ENCODE measurements at regions of chr10 and their contacts with region 1.

Region 1: GRCh38 chr10:75021379-75022249 is 89.8 kb upstream of the SAMD8 start:
- DNase-seq: peak; percentile 60 to 64
- H3K4me3 ChIP-seq: peak overlapping the region; percentile 23
- H3K4me3 Mint-ChIP-seq: peak overlapping the region; percentile 76
- H3K27ac Mint-ChIP-seq: peak overlapping the region; percentile 71
- H3K4me1 ChIP-seq: no peaks in the 10 kb centered on the region
- H3K4me1 Mint-ChIP-seq: peaks cover 21% of the 10 kb centered on the region
- H3K27me3 ChIP-seq: no peaks in the 10 kb centered on the region
- H3K27me3 Mint-ChIP-seq: no peaks in the 10 kb centered on the region
- CTCF ChIP-seq: no peak

Region 2: GRCh38 chr10:74262856-74263255 is 758.8 kb before region 1 on chr10:
- CTCF ChIA-PET with region 1: no interaction called
- POLR2A ChIA-PET with region 1: no interaction called
- intact Hi-C with region 1: loop called (anchors 1 kb)
- DNase-seq: no peak
- H3K4me3 ChIP-seq: no peak overlapping the region
- H3K4me3 Mint-ChIP-seq: no peak overlapping the region
- H3K27ac Mint-ChIP-seq: no peak overlapping the region
- H3K4me1 ChIP-seq: no peaks in the 10 kb centered on the region
- H3K4me1 Mint-ChIP-seq: no peaks in the 10 kb centered on the region
- H3K27me3 ChIP-seq: no peaks in the 10 kb centered on the region
- H3K27me3 Mint-ChIP-seq: no peaks in the 10 kb centered on the region
- CTCF ChIP-seq: no peak

Region 3: GRCh38 chr10:74419958-74420375 is 601.6 kb before region 1 on chr10:
- CTCF ChIA-PET with region 1: no interaction called
- POLR2A ChIA-PET with region 1: no interaction called
- intact Hi-C with region 1: loop called (anchors 2 kb)
- DNase-seq: peak in 1 of 2 experiments; percentile 46
- H3K4me3 ChIP-seq: no peak overlapping the region
- H3K4me3 Mint-ChIP-seq: no peak overlapping the region
- H3K27ac Mint-ChIP-seq: no peak overlapping the region
- H3K4me1 ChIP-seq: no peaks in the 10 kb centered on the region
- H3K4me1 Mint-ChIP-seq: no peaks in the 10 kb centered on the region
- H3K27me3 ChIP-seq: no peaks in the 10 kb centered on the region
- H3K27me3 Mint-ChIP-seq: no peaks in the 10 kb centered on the region
- CTCF ChIP-seq: peak; percentile 43 to 47

Region 4: GRCh38 chr10:74651565-74651964 is 370.0 kb before region 1 on chr10:
- CTCF ChIA-PET with region 1: no interaction called
- POLR2A ChIA-PET with region 1: no interaction called
- intact Hi-C with region 1: no loop called
- DNase-seq: no peak
- H3K4me3 ChIP-seq: no peak overlapping the region
- H3K4me3 Mint-ChIP-seq: no peak overlapping the region
- H3K27ac Mint-ChIP-seq: no peak overlapping the region
- H3K4me1 ChIP-seq: no peaks in the 10 kb centered on the region
- H3K4me1 Mint-ChIP-seq: no peaks in the 10 kb centered on the region
- H3K27me3 ChIP-seq: no peaks in the 10 kb centered on the region
- H3K27me3 Mint-ChIP-seq: no peaks in the 10 kb centered on the region
- CTCF ChIP-seq: no peak

Region 5: GRCh38 chr10:74738985-74739567 is 282.5 kb before region 1 on chr10:
- CTCF ChIA-PET with region 1: interaction called, 5 read pairs
- POLR2A ChIA-PET with region 1: no interaction called
- intact Hi-C with region 1: loop called (anchors 5 kb)
- DNase-seq: no peak
- H3K4me3 ChIP-seq: no peak overlapping the region
- H3K4me3 Mint-ChIP-seq: no peak overlapping the region
- H3K27ac Mint-ChIP-seq: no peak overlapping the region
- H3K4me1 ChIP-seq: no peaks in the 10 kb centered on the region
- H3K4me1 Mint-ChIP-seq: peaks cover 6% of the 10 kb centered on the region
- H3K27me3 ChIP-seq: no peaks in the 10 kb centered on the region
- H3K27me3 Mint-ChIP-seq: no peaks in the 10 kb centered on the region
- CTCF ChIP-seq: peak in 1 of 2 experiments; percentile 44

Region 6: DNA sequence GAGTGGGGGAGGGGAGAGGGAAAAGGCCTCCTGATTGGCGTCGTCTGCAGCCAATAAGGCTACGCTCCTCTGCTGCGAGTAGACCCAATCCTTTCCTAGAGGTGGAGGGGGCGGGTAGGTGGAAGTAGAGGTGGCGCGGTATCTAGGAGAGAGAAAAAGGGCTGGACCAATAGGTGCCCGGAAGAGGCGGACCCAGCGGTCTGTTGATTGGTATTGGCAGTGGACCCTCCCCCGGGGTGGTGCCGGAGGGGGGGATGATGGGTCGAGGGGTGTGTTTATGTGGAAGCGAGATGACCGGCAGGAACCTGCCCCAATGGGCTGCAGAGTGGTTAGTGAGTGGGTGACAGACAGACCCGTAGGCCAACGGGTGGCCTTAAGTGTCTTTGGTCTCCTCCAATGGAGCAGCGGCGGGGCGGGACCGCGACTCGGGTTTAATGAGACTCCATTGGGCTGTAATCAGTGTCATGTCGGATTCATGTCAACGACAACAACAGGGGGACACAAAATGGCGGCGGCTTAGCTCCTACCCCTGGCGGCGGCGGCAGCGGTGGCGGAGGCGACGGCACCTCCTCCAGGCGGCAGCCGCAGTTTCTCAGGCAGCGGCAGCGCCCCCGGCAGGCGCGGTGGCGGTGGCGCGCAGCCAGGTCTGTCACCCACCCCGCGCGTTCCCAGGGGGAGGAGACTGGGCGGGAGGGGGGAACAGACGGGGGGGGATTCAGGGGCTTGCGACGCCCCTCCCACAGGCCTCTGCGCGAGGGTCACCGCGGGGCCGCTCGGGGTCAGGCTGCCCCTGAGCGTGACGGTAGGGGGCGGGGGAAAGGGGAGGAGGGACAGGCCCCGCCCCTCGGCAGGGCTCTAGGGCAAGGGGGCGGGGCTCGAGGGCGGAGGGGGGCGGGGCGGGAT is 195.2 kb before region 1 on chr10 and contains the start of gene KAT6B:
- CTCF ChIA-PET with region 1: no interaction called
- POLR2A ChIA-PET with region 1: no interaction called
- intact Hi-C with region 1: loop called (anchors 1 kb)
- DNase-seq: peak; percentile 100
- H3K4me3 ChIP-seq: peak within 1 kb of the TSS; percentile 98
- H3K4me3 Mint-ChIP-seq: peak within 1 kb of the TSS; percentile 86
- H3K27ac Mint-ChIP-seq: peak within 1 kb of the TSS; percentile 96
- H3K4me1 ChIP-seq: peaks cover 24% of the 10 kb centered on the region
- H3K4me1 Mint-ChIP-seq: peaks cover 31% of the 10 kb centered on the region
- H3K27me3 ChIP-seq: no peaks in the 10 kb centered on the region
- H3K27me3 Mint-ChIP-seq: no peaks in the 10 kb centered on the region
- CTCF ChIP-seq: peak in 1 of 2 experiments; percentile 26
- total RNA-seq, gene KAT6B: 14.9 and 16.8 TPM in 2 replicates

Region 7: GRCh38 chr10:74977913-74978847 is 43.4 kb before region 1 on chr10:
- CTCF ChIA-PET with region 1: interaction called, 5 read pairs
- POLR2A ChIA-PET with region 1: no interaction called
- intact Hi-C with region 1: loop called (anchors 5 kb)
- DNase-seq: no peak
- H3K4me3 ChIP-seq: no peak overlapping the region
- H3K4me3 Mint-ChIP-seq: no peak overlapping the region
- H3K27ac Mint-ChIP-seq: no peak overlapping the region
- H3K4me1 ChIP-seq: no peaks in the 10 kb centered on the region
- H3K4me1 Mint-ChIP-seq: peaks cover 5% of the 10 kb centered on the region
- H3K27me3 ChIP-seq: no peaks in the 10 kb centered on the region
- H3K27me3 Mint-ChIP-seq: no peaks in the 10 kb centered on the region
- CTCF ChIP-seq: no peak

Region 8: GRCh38 chr10:75099952-75100763 is 78.5 kb after region 1 on chr10:
- CTCF ChIA-PET with region 1: no interaction called
- POLR2A ChIA-PET with region 1: no interaction called
- intact Hi-C with region 1: loop called (anchors 1 kb)
- DNase-seq: peak; percentile 76 to 89
- H3K4me3 ChIP-seq: no peak overlapping the region
- H3K4me3 Mint-ChIP-seq: no peak overlapping the region
- H3K27ac Mint-ChIP-seq: no peak overlapping the region
- H3K4me1 ChIP-seq: peaks cover 5% of the 10 kb centered on the region; the same call in 1 of the 2 replicates
- H3K4me1 Mint-ChIP-seq: peaks cover 8% of the 10 kb centered on the region
- H3K27me3 ChIP-seq: no peaks in the 10 kb centered on the region
- H3K27me3 Mint-ChIP-seq: no peaks in the 10 kb centered on the region
- CTCF ChIP-seq: peak; percentile 95 to 97